Activated CD4-positive, alpha-beta memory T cell treated with anti-CD3 and anti-CD28 coated beads for 36 hours (primary cell): ENCODE measurements at regions of chr17 and their contacts with region 1.

Region 1: DNA sequence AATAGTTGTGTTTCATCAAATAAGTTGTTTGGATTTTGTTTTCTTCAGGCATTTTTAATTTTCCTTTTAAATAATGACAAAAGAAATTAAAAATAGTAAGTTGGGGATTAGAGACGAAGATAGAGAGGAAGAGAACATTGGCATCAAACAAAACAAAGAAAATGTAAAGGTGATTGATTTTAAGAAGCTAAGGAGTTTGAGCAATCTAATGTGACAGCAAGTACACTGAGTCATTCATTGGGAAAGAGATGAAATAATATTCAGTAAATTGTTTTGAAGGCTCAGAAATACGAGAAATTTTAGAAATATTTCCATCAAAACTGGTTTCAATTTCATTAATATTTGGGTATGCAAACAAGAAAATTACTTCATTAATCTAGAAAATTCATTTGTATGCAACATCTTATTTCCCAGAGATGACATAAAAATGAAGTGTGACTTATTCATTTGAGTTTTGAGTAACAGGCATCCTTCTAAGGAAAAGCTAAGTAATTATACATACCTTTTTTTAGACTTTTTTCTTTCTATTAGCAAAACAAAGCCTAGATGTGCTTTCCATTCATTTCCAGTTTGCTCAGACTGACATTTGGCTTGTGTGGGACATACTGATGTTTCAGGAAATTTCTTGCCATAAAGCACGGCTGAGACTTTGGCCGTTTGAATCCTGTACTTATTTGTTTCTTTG is 66.7 kb downstream of the COX10 start:
- DNase-seq: no peak
- H3K4me3 Mint-ChIP-seq: no peak overlapping the region
- H3K27ac Mint-ChIP-seq: peak overlapping the region; percentile 64
- H3K4me1 Mint-ChIP-seq: peaks cover 18% of the 10 kb centered on the region
- H3K27me3 Mint-ChIP-seq: no peaks in the 10 kb centered on the region

Region 2: DNA sequence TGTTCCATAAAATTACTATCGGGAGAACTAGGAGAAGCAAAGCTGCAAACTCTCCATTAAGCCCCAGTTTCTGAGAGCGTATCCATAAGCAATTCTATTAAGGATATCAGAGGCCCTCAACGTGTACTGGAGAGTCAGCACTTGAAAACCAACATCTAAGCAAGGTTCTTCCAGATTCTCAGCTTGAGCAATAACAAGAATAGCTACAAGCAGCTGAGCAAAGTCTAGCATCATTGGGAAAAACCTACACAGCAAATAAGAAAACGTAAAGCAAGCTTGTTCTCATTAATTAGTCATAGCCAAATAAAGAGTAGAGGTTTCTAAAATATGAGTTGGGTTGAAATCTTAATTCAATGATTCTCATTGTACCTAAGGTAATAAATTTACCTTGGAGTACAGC is 93.6 kb before region 1 on chr17:
- CTCF ChIA-PET with region 1: no interaction called
- POLR2A ChIA-PET with region 1: no interaction called
- intact Hi-C with region 1: loop called (anchors 5 kb)
- DNase-seq: no peak
- H3K4me3 Mint-ChIP-seq: no peak overlapping the region
- H3K27ac Mint-ChIP-seq: no peak overlapping the region
- H3K4me1 Mint-ChIP-seq: peaks cover 42% of the 10 kb centered on the region
- H3K27me3 Mint-ChIP-seq: no peaks in the 10 kb centered on the region

Region 3: DNA sequence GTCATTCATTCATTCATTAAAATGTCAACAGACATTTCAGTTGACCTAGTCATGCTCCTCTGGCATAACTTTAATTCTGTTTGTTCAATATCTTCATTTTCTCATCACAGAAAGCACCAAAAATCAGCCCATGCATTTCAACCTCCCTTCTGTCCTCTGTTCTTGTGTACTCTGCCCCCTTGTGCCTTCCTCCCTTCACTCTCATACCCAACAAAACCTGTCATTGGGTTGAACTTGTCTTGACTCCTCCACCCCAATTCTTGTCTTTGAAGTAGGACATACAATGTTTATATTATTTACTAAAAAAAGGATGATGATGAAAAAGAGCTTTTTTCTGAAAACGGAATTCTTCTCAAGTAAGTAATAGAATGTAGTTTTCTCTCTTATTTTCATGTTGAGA is 22.9 kb before region 1 on chr17:
- CTCF ChIA-PET with region 1: no interaction called
- POLR2A ChIA-PET with region 1: no interaction called
- intact Hi-C with region 1: no loop called
- DNase-seq: no peak
- H3K4me3 Mint-ChIP-seq: no peak overlapping the region
- H3K27ac Mint-ChIP-seq: no peak overlapping the region
- H3K4me1 Mint-ChIP-seq: peaks cover 67% of the 10 kb centered on the region
- H3K27me3 Mint-ChIP-seq: no peaks in the 10 kb centered on the region

Region 4: GRCh38 chr17:14152721-14153120 is 16.7 kb after region 1 on chr17:
- CTCF ChIA-PET with region 1: no interaction called
- POLR2A ChIA-PET with region 1: no interaction called
- intact Hi-C with region 1: loop called (anchors 2 kb)
- DNase-seq: no peak
- H3K4me3 Mint-ChIP-seq: no peak overlapping the region
- H3K27ac Mint-ChIP-seq: no peak overlapping the region
- H3K4me1 Mint-ChIP-seq: peaks cover 35% of the 10 kb centered on the region
- H3K27me3 Mint-ChIP-seq: no peaks in the 10 kb centered on the region